Calu3 (cell line): ENCODE measurements at regions of chr4 and their contacts with region 1.

Region 1: GRCh38 chr4:187544461-187545053 is 451.0 kb upstream of the ZFP42 start:
- DNase-seq: no peak
- H3K4me3 Mint-ChIP-seq: no peak overlapping the region
- H3K27ac Mint-ChIP-seq: no peak overlapping the region
- H3K4me1 Mint-ChIP-seq: peaks cover 17% of the 10 kb centered on the region
- H3K27me3 Mint-ChIP-seq: no peaks in the 10 kb centered on the region
- CTCF ChIP-seq: no peak

Region 2: DNA sequence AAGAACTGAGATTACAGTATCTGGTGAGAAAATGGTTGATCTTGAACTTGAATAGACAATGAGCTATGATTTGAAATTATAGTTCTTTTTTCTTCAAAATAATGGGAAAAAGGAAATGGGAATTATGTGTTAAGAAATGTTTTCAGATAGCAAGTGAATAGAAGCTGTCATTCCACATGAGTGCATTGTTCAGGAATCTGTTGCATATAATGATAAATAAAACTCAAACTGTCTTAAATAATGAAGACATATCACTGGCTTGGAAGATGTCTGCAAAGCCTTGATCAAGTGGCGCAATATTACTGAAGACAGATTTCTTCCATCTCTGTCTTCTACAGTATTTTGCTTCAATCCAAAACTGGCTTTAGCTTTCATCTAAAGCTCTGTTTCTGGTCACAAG is 28.3 kb before region 1 on chr4:
- CTCF ChIA-PET with region 1: no interaction called
- intact Hi-C with region 1: loop called (anchors 2 kb)
- DNase-seq: no peak
- H3K4me3 Mint-ChIP-seq: no peak overlapping the region
- H3K27ac Mint-ChIP-seq: no peak overlapping the region
- H3K4me1 Mint-ChIP-seq: peaks cover 13% of the 10 kb centered on the region
- H3K27me3 Mint-ChIP-seq: no peaks in the 10 kb centered on the region
- CTCF ChIP-seq: no peak

Region 3: DNA sequence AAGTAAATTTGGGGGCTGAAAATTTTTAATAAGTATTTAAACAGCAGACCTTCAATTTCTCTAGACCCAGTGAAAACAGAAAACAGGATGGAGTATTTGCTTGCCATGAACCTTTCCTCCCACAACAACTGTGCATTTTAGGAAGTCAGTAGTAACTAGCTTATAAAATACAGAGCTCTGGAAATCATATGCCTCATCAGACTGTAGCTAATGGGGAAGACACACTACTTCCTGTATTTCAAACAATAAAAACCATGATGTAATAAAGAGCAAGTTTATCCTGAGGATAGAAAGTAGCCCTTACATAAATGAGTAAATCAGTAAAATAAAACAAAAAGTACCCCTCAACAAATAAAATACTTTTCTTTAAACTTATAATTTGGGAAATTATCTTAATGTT is 170.9 kb after region 1 on chr4:
- CTCF ChIA-PET with region 1: no interaction called
- intact Hi-C with region 1: no loop called
- DNase-seq: no peak
- H3K4me3 Mint-ChIP-seq: no peak overlapping the region
- H3K27ac Mint-ChIP-seq: no peak overlapping the region
- H3K4me1 Mint-ChIP-seq: no peaks in the 10 kb centered on the region
- H3K27me3 Mint-ChIP-seq: no peaks in the 10 kb centered on the region
- CTCF ChIP-seq: no peak

Region 4: GRCh38 chr4:187732524-187732923 is 188.0 kb after region 1 on chr4:
- CTCF ChIA-PET with region 1: no interaction called
- intact Hi-C with region 1: no loop called
- DNase-seq: no peak
- H3K4me3 Mint-ChIP-seq: no peak overlapping the region
- H3K27ac Mint-ChIP-seq: no peak overlapping the region
- H3K4me1 Mint-ChIP-seq: no peaks in the 10 kb centered on the region
- H3K27me3 Mint-ChIP-seq: no peaks in the 10 kb centered on the region
- CTCF ChIP-seq: no peak